ENCODE measurements at regions of chr16 and their contacts with region 1.

Region 1: GRCh38 chr16:89720813-89721545 is at the starts of genes VPS9D1 and ZNF276:
- DNase-seq: peak in 7 of 9 donors; percentile 73 to 88 (median 87)
- ATAC-seq: peak; percentile 67
- H3K4me3 ChIP-seq: peak within 1 kb of the TSS; percentile 94
- H3K4me3 Mint-ChIP-seq: peak within 1 kb of the TSS; percentile 88 to 99 (median 94)
- H3K27ac ChIP-seq: peak within 1 kb of the TSS; percentile 89
- H3K27ac Mint-ChIP-seq: peak within 1 kb of the TSS; percentile 88 to 99 (median 95)
- H3K4me1 ChIP-seq: peaks cover 27 to 35% of the 10 kb centered on the region in 2 donors
- H3K4me1 Mint-ChIP-seq: peaks cover 13 to 37% (median 30%) of the 10 kb centered on the region in 7 donors
- H3K27me3 ChIP-seq: no peaks in the 10 kb centered on the region
- H3K27me3 Mint-ChIP-seq: no peaks in the 10 kb centered on the region
- total RNA-seq, gene VPS9D1: 11.2 to 28.9 (median 13.3) TPM
- total RNA-seq, gene ZNF276: 75.4 to 160 (median 137) TPM

Region 2: DNA sequence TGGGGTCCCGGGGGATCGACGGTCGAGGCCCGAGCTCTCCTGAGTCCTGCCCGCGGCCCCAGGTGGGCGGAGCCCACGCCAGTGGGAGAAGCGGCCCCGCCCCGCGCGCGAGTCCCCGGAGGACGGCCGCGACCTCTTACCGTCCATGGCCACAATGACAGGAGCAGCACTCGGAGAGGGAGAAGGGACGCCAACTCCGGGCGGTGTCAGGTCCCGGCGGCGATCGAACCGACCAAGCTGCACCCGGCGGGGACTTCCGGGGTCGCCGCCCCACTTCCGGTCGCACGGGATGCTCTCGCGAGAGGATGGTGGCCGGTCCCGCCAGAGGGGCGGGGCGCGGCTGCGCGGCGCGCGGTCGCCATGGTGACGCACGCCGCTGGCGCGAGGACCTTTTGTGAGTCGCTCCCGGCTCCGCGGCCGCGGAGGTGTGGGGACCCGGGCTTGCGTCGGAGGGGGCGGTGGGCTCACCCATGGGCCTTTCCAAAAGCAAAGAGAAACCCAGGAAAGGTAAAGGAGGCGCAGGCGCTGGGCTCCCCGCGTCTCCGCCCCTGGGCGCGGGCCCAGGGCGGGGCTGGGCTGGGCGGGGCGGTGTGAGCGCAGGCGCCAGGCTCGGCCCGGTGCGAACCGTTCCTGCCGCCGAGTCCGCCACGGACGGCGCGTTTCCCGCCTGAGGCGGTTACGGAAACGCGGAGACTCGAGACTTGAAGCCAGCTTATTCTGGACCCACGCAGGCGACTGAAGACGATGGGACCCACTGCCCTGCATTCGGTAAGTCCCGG is 63.3 kb before region 1 on chr16 and contains the starts of genes CHMP1A and SPATA33:
- CTCF ChIA-PET with region 1: interaction called, 4 read pairs
- POLR2A ChIA-PET with region 1: no interaction called
- intact Hi-C with region 1: loop called in 1 of 2 experiments (anchors 2 kb)
- DNase-seq: peak; percentile 87 to 98 (median 94)
- ATAC-seq: peak; percentile 95
- H3K4me3 ChIP-seq: peak within 1 kb of the TSS; percentile 88
- H3K4me3 Mint-ChIP-seq: peak within 1 kb of the TSS; percentile 82 to 93 (median 86)
- H3K27ac ChIP-seq: peak within 1 kb of the TSS; percentile 85
- H3K27ac Mint-ChIP-seq: peak within 1 kb of the TSS; percentile 71 to 89 (median 85)
- H3K4me1 ChIP-seq: peaks cover 6 to 16% of the 10 kb centered on the region in 2 donors
- H3K4me1 Mint-ChIP-seq: peaks cover 17 to 44% (median 36%) of the 10 kb centered on the region in 7 donors
- H3K27me3 ChIP-seq: no peaks in the 10 kb centered on the region
- H3K27me3 Mint-ChIP-seq: no peaks in the 10 kb centered on the region
- total RNA-seq, gene CHMP1A: 64.4 to 99.0 (median 65.9) TPM
- total RNA-seq, gene SPATA33: 6.4 to 17.0 (median 7.9) TPM

Region 3: GRCh38 chr16:89706507-89707263 is 14.3 kb before region 1 on chr16:
- CTCF ChIA-PET with region 1: interaction called, 17 read pairs
- POLR2A ChIA-PET with region 1: interaction called, 50 read pairs
- intact Hi-C with region 1: loop called (anchors 1 kb)
- DNase-seq: peak in 1 of 9 donors; percentile 7
- ATAC-seq: no peak
- H3K4me3 ChIP-seq: no peak overlapping the region
- H3K4me3 Mint-ChIP-seq: peak overlapping the region in 1 of 10 donors; percentile 26
- H3K27ac ChIP-seq: no peak overlapping the region
- H3K27ac Mint-ChIP-seq: no peak overlapping the region
- H3K4me1 ChIP-seq: peaks cover 4 to 13% of the 10 kb centered on the region in 2 donors
- H3K4me1 Mint-ChIP-seq: peaks cover 5 to 23% (median 14%) of the 10 kb centered on the region in 7 donors
- H3K27me3 ChIP-seq: no peaks in the 10 kb centered on the region
- H3K27me3 Mint-ChIP-seq: no peaks in the 10 kb centered on the region

Region 4: DNA sequence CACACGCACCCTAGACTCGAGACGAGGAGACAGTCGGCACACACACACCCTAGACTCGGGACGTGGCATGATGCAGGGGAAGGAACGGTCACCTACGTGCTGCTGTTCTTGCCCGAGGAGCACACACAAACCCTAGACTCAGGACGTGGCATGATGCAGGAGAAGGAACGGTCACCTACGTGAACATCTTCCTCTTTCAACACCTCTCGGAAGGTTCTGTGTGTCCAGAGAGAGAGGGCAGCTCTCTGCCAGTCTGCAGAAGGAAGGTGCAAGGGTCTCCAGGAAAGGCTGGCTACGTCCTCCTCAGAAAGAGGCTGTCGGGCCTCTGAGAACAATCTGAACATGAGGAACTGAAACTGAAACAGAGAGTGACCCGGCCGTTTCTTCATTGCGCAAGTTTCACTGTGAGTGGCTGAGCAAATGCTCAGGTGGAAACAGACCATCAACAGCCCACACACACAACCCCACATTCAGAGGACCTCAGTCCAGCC is 43.8 kb after region 1 on chr16:
- CTCF ChIA-PET with region 1: interaction called, 3 read pairs
- POLR2A ChIA-PET with region 1: interaction called, 24 read pairs
- intact Hi-C with region 1: loop called in 1 of 2 experiments (anchors 1 kb)
- DNase-seq: no peak
- ATAC-seq: peak; percentile 81
- H3K4me3 ChIP-seq: peak overlapping the region; percentile 58
- H3K4me3 Mint-ChIP-seq: peak overlapping the region; percentile 56 to 94 (median 69)
- H3K27ac ChIP-seq: peak overlapping the region; percentile 43
- H3K27ac Mint-ChIP-seq: peak overlapping the region; percentile 49 to 91 (median 85)
- H3K4me1 ChIP-seq: peaks cover 20 to 27% of the 10 kb centered on the region in 2 donors
- H3K4me1 Mint-ChIP-seq: peaks cover 13 to 42% (median 33%) of the 10 kb centered on the region in 7 donors
- H3K27me3 ChIP-seq: no peaks in the 10 kb centered on the region
- H3K27me3 Mint-ChIP-seq: no peaks in the 10 kb centered on the region

Region 5: DNA sequence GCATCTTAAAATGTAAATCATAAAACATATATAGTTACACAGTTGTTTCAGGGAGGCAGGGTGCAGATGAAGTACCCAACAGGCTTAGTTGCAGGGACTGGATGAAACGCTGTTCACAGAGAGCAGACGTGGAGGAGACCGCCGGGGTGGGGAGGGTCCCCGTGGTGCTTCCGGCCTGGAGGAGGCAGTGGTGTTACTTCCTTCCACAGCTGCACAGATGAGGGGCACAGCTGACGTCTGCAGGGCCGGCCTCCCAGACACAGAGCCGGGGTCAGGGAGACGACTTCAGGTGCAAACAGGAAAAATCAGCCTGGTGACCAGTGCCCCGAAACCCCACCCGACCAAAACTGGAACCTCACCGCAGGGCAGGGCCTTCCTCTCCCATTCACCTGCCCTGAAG is 124.4 kb after region 1 on chr16:
- CTCF ChIA-PET with region 1: no interaction called
- POLR2A ChIA-PET with region 1: no interaction called
- intact Hi-C with region 1: no loop called
- DNase-seq: peak in 6 of 9 donors; percentile 10 to 44 (median 33)
- ATAC-seq: peak; percentile 44
- H3K4me3 ChIP-seq: no peak overlapping the region
- H3K4me3 Mint-ChIP-seq: peak overlapping the region in 9 of 10 donors; percentile 25 to 64 (median 51)
- H3K27ac ChIP-seq: no peak overlapping the region
- H3K27ac Mint-ChIP-seq: peak overlapping the region in 3 of 9 donors; percentile 17 to 46 (median 38)
- H3K4me1 ChIP-seq: peaks cover 3 to 17% of the 10 kb centered on the region in 2 donors
- H3K4me1 Mint-ChIP-seq: peaks cover 3 to 13% (median 10%) of the 10 kb centered on the region in 7 donors
- H3K27me3 ChIP-seq: no peaks in the 10 kb centered on the region
- H3K27me3 Mint-ChIP-seq: peaks cover 0 to 5% (median 0%) of the 10 kb centered on the region in 5 donors

Region 6: GRCh38 chr16:89860747-89861304 is 139.8 kb after region 1 on chr16:
- CTCF ChIA-PET with region 1: no interaction called
- POLR2A ChIA-PET with region 1: interaction called, 3 read pairs
- intact Hi-C with region 1: loop called (anchors 1 kb)
- DNase-seq: peak; percentile 61 to 85 (median 70)
- ATAC-seq: peak; percentile 91
- H3K4me3 ChIP-seq: no peak overlapping the region
- H3K4me3 Mint-ChIP-seq: peak overlapping the region in 5 of 10 donors; percentile 1 to 41 (median 26)
- H3K27ac ChIP-seq: no peak overlapping the region
- H3K27ac Mint-ChIP-seq: peak overlapping the region in 8 of 9 donors; percentile 39 to 83 (median 70)
- H3K4me1 ChIP-seq: peaks cover 27 to 32% of the 10 kb centered on the region in 2 donors
- H3K4me1 Mint-ChIP-seq: peaks cover 32 to 42% (median 34%) of the 10 kb centered on the region in 7 donors
- H3K27me3 ChIP-seq: no peaks in the 10 kb centered on the region
- H3K27me3 Mint-ChIP-seq: no peaks in the 10 kb centered on the region

Region 7: DNA sequence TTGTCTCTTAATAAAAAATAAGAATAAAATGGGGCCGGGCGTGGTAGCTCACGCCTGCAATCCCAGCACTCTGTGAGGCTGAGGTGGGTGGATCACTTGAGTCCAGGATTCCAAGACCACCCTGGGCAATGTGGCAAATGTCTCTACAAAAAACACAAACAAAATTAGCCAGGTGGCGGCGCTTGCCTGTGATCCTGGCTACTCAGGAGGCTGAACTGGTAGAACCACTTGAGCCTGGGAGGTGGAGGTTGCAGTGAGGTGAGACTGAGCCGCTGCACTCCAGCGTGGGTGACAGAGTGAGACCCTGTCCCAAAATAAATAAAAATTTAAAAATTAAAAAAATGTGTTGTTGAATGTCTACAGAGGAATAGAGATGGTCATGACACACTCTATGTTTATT is 224.7 kb after region 1 on chr16:
- CTCF ChIA-PET with region 1: no interaction called
- POLR2A ChIA-PET with region 1: no interaction called
- intact Hi-C with region 1: loop called in 1 of 2 experiments (anchors 1 kb)
- DNase-seq: no peak
- ATAC-seq: no peak
- H3K4me3 ChIP-seq: no peak overlapping the region
- H3K4me3 Mint-ChIP-seq: no peak overlapping the region
- H3K27ac ChIP-seq: no peak overlapping the region
- H3K27ac Mint-ChIP-seq: no peak overlapping the region
- H3K4me1 ChIP-seq: peaks cover 10 to 11% of the 10 kb centered on the region in 2 donors
- H3K4me1 Mint-ChIP-seq: peaks cover 7 to 17% (median 9%) of the 10 kb centered on the region in 7 donors
- H3K27me3 ChIP-seq: no peaks in the 10 kb centered on the region
- H3K27me3 Mint-ChIP-seq: peaks cover 15 to 53% (median 17%) of the 10 kb centered on the region in 5 donors

Measured in naive thymus-derived CD4-positive, alpha-beta T cell (primary cell).